ENCODE measurements at regions of chr5 and their contacts with region 1.

Region 1: DNA sequence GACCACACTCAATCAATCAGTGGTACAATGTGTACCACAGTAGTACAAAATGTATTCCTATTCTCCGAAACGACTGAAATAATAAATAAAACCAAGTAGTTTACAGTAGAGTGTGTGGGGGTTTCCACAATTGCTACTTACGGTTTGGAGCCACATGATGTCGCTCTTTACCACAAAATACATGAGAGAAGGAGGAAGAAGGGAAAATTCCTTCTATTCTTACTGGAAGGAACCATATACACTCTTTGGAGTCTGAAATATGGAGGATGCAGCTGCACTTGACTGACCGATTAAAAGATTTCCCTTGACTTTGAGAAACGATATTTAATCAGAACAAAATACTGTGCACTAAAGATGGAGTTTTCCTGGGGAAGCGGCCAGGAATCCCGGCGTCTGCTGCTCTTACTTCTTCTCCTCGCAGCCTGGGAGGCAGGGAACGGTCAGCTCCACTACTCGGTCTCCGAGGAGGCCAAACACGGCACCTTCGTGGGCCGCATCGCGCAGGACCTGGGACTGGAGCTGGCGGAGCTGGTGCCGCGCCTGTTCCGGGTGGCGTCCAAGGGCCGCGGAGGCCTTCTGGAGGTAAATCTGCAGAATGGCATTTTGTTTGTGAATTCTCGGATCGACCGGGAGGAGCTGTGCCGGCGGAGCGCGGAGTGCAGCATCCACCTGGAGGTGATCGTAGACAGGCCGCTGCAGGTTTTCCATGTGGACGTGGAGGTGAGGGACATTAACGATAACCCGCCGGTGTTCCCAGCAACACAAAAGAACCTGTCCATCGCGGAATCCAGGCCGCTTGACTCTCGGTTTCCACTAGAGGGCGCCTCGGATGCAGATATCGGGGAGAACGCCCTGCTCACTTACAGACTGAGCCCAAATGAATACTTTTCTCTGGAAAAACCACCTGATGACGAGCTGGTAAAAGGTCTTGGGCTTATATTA is at the start of gene PCDHA4:
- DNase-seq: peak; percentile 65
- H3K4me3 ChIP-seq: peak within 1 kb of the TSS; percentile 63
- H3K27ac ChIP-seq: peak within 1 kb of the TSS in 1 of 2 experiments; percentile 77; a peak in 2 of 4 replicates
- H3K4me1 ChIP-seq: no peaks in the 10 kb centered on the region; a peak in 2 of 4 replicates
- H3K27me3 ChIP-seq: no peaks in the 10 kb centered on the region
- CTCF ChIP-seq: peak; percentile 63
- EP300 ChIP-seq: no peak
- RAD21 ChIP-seq: peak; percentile 69
- polyA plus RNA-seq, gene PCDHA4: 1.2 and 1.4 TPM in 2 replicates

Region 2: GRCh38 chr5:140785905-140786686 is 21.0 kb before region 1 on chr5 and contains the start of gene PCDHA1:
- CTCF ChIA-PET with region 1: interaction called, 12 read pairs
- POLR2A ChIA-PET with region 1: no interaction called
- DNase-seq: peak; percentile 36
- H3K4me3 ChIP-seq: peak within 1 kb of the TSS in 1 of 2 experiments; percentile 31; a peak in 2 of 4 replicates
- H3K27ac ChIP-seq: no peak within 1 kb of the TSS
- H3K4me1 ChIP-seq: no peaks in the 10 kb centered on the region
- H3K27me3 ChIP-seq: no peaks in the 10 kb centered on the region
- CTCF ChIP-seq: peak; percentile 29
- EP300 ChIP-seq: no peak
- RAD21 ChIP-seq: peak; percentile 47
- polyA plus RNA-seq, gene PCDHA1: 0.16 and 0.21 TPM in 2 replicates

Region 3: GRCh38 chr5:140795259-140795641 is 11.9 kb before region 1 on chr5:
- CTCF ChIA-PET with region 1: interaction called, 23 read pairs
- POLR2A ChIA-PET with region 1: no interaction called
- DNase-seq: no peak
- H3K4me3 ChIP-seq: peak overlapping the region in 1 of 2 experiments; percentile 16; a peak in 1 of 4 replicates
- H3K27ac ChIP-seq: no peak overlapping the region
- H3K4me1 ChIP-seq: no peaks in the 10 kb centered on the region
- H3K27me3 ChIP-seq: no peaks in the 10 kb centered on the region
- CTCF ChIP-seq: no peak
- EP300 ChIP-seq: no peak
- RAD21 ChIP-seq: no peak

Region 4: DNA sequence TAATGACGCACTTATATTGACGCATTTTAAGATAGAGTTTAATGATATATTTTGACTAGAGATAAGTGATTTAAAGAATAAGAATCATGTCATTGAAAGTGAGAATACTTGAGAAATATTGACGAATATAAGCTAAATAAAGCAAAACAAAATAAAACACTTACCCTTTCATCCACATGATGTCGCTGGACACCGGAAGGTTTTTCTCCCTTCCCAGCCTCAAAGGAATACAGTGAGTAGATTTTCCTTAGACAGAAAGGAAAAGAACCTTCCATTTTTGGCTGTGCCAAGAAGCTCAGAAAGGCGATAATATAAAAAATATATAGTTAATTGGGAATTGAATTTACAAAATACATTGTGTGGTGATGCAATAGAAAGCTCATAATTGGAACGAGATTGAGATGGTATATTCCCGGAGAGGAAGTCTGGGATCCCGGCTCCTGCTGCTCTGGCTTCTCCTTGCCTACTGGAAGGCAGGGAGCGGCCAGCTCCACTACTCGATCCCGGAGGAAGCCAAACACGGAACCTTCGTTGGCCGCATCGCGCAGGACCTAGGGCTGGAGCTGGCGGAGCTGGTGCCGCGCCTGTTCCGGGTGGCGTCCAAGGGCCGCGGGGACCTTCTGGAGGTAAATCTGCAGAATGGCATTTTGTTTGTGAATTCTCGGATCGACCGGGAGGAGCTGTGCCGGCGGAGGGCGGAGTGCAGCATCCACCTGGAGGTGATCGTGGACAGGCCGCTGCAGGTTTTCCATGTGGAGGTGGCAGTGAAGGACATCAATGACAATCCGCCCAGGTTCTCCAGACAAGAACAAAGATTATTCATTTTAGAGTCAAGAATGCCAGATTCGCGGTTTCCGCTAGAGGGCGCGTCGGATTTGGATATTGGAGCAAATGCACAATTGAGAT is 14.5 kb after region 1 on chr5 and contains the start of gene PCDHA5:
- CTCF ChIA-PET with region 1: interaction called, 39 read pairs
- POLR2A ChIA-PET with region 1: no interaction called
- DNase-seq: no peak
- H3K4me3 ChIP-seq: no peak within 1 kb of the TSS
- H3K27ac ChIP-seq: no peak within 1 kb of the TSS
- H3K4me1 ChIP-seq: no peaks in the 10 kb centered on the region
- H3K27me3 ChIP-seq: no peaks in the 10 kb centered on the region
- CTCF ChIP-seq: no peak
- EP300 ChIP-seq: no peak
- RAD21 ChIP-seq: no peak
- polyA plus RNA-seq, gene PCDHA5: 0.02 TPM in 2 replicates

Region 5: GRCh38 chr5:140868721-140869554 is 61.8 kb after region 1 on chr5 and contains the start of gene PCDHA11:
- CTCF ChIA-PET with region 1: no interaction called
- POLR2A ChIA-PET with region 1: no interaction called
- DNase-seq: no peak
- H3K4me3 ChIP-seq: no peak within 1 kb of the TSS
- H3K27ac ChIP-seq: no peak within 1 kb of the TSS
- H3K4me1 ChIP-seq: no peaks in the 10 kb centered on the region
- H3K27me3 ChIP-seq: no peaks in the 10 kb centered on the region
- CTCF ChIP-seq: no peak
- EP300 ChIP-seq: no peak
- RAD21 ChIP-seq: no peak
- polyA plus RNA-seq, gene PCDHA11: not detected in 2 replicates